ENCODE measurements at regions of chr10 and their contacts with region 1.

Region 1: GRCh38 chr10:80662577-80663261 is 125.0 kb downstream of the SH2D4B start:
- DNase-seq: peak; percentile 81
- ATAC-seq: peak; percentile 89
- H3K4me3 Mint-ChIP-seq: peak overlapping the region; percentile 44
- H3K27ac Mint-ChIP-seq: no peak overlapping the region
- H3K4me1 Mint-ChIP-seq: peaks cover 3% of the 10 kb centered on the region
- H3K27me3 Mint-ChIP-seq: peaks cover 21% of the 10 kb centered on the region
- CTCF ChIP-seq: peak; percentile 98

Region 2: DNA sequence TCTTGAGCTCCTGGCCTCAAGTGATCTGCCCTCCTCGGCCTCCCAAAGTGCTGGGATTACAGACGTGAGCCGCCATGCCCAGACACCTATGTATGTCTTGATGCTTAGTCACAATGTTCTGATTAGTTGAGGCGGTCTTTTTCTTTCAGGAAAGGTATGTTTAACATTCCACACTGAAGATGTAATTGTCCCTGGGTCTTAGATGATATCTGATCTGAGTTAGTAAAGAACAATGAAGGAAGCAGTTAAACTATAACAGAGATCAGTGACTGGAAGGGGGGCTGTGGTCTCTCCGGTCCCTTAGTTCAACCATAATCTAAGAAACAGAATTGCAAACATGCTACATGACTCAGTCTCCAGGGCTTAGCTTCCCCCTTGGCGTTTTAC is 156.5 kb before region 1 on chr10:
- CTCF ChIA-PET with region 1: no interaction called
- POLR2A ChIA-PET with region 1: no interaction called
- intact Hi-C with region 1: no loop called
- DNase-seq: no peak
- ATAC-seq: no peak
- H3K4me3 Mint-ChIP-seq: no peak overlapping the region
- H3K27ac Mint-ChIP-seq: peak overlapping the region; percentile 36
- H3K4me1 Mint-ChIP-seq: peaks cover 57% of the 10 kb centered on the region
- H3K27me3 Mint-ChIP-seq: no peaks in the 10 kb centered on the region
- CTCF ChIP-seq: no peak

Region 3: GRCh38 chr10:80518807-80519360 is 143.8 kb before region 1 on chr10:
- CTCF ChIA-PET with region 1: no interaction called
- POLR2A ChIA-PET with region 1: no interaction called
- intact Hi-C with region 1: no loop called
- DNase-seq: no peak
- ATAC-seq: no peak
- H3K4me3 Mint-ChIP-seq: no peak overlapping the region
- H3K27ac Mint-ChIP-seq: peak overlapping the region; percentile 6
- H3K4me1 Mint-ChIP-seq: peaks cover 41% of the 10 kb centered on the region
- H3K27me3 Mint-ChIP-seq: no peaks in the 10 kb centered on the region
- CTCF ChIP-seq: no peak

Region 4: GRCh38 chr10:80619036-80619435 is 43.7 kb before region 1 on chr10:
- CTCF ChIA-PET with region 1: interaction called, 11 read pairs
- POLR2A ChIA-PET with region 1: no interaction called
- intact Hi-C with region 1: no loop called
- DNase-seq: no peak
- ATAC-seq: no peak
- H3K4me3 Mint-ChIP-seq: no peak overlapping the region
- H3K27ac Mint-ChIP-seq: no peak overlapping the region
- H3K4me1 Mint-ChIP-seq: no peaks in the 10 kb centered on the region
- H3K27me3 Mint-ChIP-seq: no peaks in the 10 kb centered on the region
- CTCF ChIP-seq: no peak

Region 5: DNA sequence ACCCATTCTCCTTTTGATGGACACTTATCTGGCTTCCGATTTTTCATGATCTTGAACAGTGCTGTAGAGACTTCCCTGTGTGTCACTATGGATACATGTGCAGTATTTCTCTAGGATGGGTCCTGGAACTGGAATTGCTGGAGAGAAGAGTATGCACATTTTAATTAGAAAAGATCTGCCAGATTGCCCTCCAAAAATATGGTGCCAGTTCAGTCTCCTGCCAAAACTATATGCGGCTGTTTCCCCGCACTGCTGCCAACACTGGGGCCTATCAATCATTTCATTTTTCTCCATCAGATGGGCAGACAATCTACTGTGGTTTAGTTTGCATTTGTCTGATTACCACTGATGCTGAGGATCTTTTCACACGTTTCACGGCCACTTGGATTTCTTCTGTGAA is 20.1 kb before region 1 on chr10:
- CTCF ChIA-PET with region 1: interaction called, 13 read pairs
- POLR2A ChIA-PET with region 1: no interaction called
- intact Hi-C with region 1: no loop called
- DNase-seq: no peak
- ATAC-seq: no peak
- H3K4me3 Mint-ChIP-seq: no peak overlapping the region
- H3K27ac Mint-ChIP-seq: no peak overlapping the region
- H3K4me1 Mint-ChIP-seq: no peaks in the 10 kb centered on the region
- H3K27me3 Mint-ChIP-seq: peaks cover 7% of the 10 kb centered on the region
- CTCF ChIP-seq: no peak

Region 6: GRCh38 chr10:80684259-80684658 is 21.5 kb after region 1 on chr10:
- CTCF ChIA-PET with region 1: interaction called, 13 read pairs
- POLR2A ChIA-PET with region 1: no interaction called
- intact Hi-C with region 1: no loop called
- DNase-seq: no peak
- ATAC-seq: peak; percentile 34
- H3K4me3 Mint-ChIP-seq: no peak overlapping the region
- H3K27ac Mint-ChIP-seq: no peak overlapping the region
- H3K4me1 Mint-ChIP-seq: no peaks in the 10 kb centered on the region
- H3K27me3 Mint-ChIP-seq: no peaks in the 10 kb centered on the region
- CTCF ChIP-seq: no peak

Region 7: GRCh38 chr10:80753612-80754011 is 90.9 kb after region 1 on chr10:
- CTCF ChIA-PET with region 1: no interaction called
- POLR2A ChIA-PET with region 1: no interaction called
- intact Hi-C with region 1: no loop called
- DNase-seq: no peak
- ATAC-seq: no peak
- H3K4me3 Mint-ChIP-seq: no peak overlapping the region
- H3K27ac Mint-ChIP-seq: no peak overlapping the region
- H3K4me1 Mint-ChIP-seq: no peaks in the 10 kb centered on the region
- H3K27me3 Mint-ChIP-seq: peaks cover 13% of the 10 kb centered on the region
- CTCF ChIP-seq: no peak

Region 8: GRCh38 chr10:80861882-80862281 is 199.2 kb after region 1 on chr10:
- CTCF ChIA-PET with region 1: no interaction called
- POLR2A ChIA-PET with region 1: no interaction called
- intact Hi-C with region 1: no loop called
- DNase-seq: no peak
- ATAC-seq: no peak
- H3K4me3 Mint-ChIP-seq: no peak overlapping the region
- H3K27ac Mint-ChIP-seq: no peak overlapping the region
- H3K4me1 Mint-ChIP-seq: no peaks in the 10 kb centered on the region
- H3K27me3 Mint-ChIP-seq: no peaks in the 10 kb centered on the region
- CTCF ChIP-seq: no peak

Region 9: GRCh38 chr10:80924063-80924952 is 261.6 kb after region 1 on chr10:
- CTCF ChIA-PET with region 1: interaction called, 10 read pairs
- POLR2A ChIA-PET with region 1: no interaction called
- intact Hi-C with region 1: no loop called
- DNase-seq: peak; percentile 35
- ATAC-seq: no peak
- H3K4me3 Mint-ChIP-seq: no peak overlapping the region
- H3K27ac Mint-ChIP-seq: no peak overlapping the region
- H3K4me1 Mint-ChIP-seq: no peaks in the 10 kb centered on the region
- H3K27me3 Mint-ChIP-seq: peaks cover 2% of the 10 kb centered on the region
- CTCF ChIP-seq: peak; percentile 48